HepG2 (cell line): ENCODE measurements at regions of chr15 and their contacts with region 1.

Region 1: GRCh38 chr15:39580117-39580484 is 778 bp upstream of the THBS1 start:
- DNase-seq: peak; percentile 81
- ATAC-seq: peak; percentile 81
- H3K4me3 ChIP-seq: peak overlapping the region; percentile 64 to 88 (median 67)
- H3K27ac ChIP-seq: peak overlapping the region; percentile 65
- H3K4me1 ChIP-seq: peaks cover 50% of the 10 kb centered on the region
- H3K27me3 ChIP-seq: peaks cover 0 to 4% of the 10 kb centered on the region in 2 experiments; a peak in 1 of 5 replicates
- CTCF ChIP-seq: peak; percentile 87
- EP300 ChIP-seq: no peak
- POLR2A ChIP-seq: no peak
- RAD21 ChIP-seq: peak; percentile 92

Region 2: DNA sequence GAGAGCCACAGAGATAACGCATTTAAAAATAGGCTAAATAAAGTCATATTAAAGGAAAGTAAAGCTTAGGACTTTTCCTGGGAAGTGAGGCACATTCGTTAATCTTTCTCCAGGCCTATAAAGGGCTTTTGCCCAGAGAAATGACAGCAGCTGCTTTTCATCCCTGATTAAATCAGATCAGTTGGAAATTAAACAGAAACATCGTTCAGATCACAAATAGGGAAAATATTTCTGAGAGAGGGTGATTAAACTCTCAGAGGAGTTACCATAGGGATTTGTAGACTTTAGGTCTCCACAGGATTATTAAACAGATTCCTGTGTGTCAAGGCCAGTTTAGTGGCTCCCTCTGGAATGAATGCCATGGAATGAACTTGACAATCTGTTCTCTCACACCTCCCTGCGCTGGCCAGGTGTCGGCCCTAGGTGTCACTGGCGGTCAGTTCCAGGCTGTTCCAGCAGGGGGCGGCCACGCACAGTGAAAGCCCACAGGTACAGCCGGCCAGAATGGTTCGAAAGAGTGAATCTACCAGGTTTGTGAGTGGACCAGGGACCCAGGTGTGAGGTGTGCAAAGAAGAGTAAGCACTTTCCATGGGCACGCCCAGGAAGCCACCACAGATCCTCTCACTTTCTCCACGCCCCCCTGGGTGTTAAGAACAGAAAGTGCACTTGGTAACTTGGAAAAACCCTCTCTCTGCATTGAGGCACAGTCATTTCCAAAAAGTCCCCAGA is 762.5 kb before region 1 on chr15:
- CTCF ChIA-PET with region 1: interaction called, 16 read pairs
- POLR2A ChIA-PET with region 1: no interaction called
- in situ Hi-C with region 1: loop called (anchors 10 kb)
- intact Hi-C with region 1: loop called (anchors 1 kb)
- DNase-seq: peak; percentile 66
- ATAC-seq: peak; percentile 100
- H3K4me3 ChIP-seq: no peak overlapping the region
- H3K27ac ChIP-seq: no peak overlapping the region
- H3K4me1 ChIP-seq: no peaks in the 10 kb centered on the region
- H3K27me3 ChIP-seq: peaks cover 0 to 5% of the 10 kb centered on the region in 2 experiments; a peak in 2 of 5 replicates
- CTCF ChIP-seq: peak; percentile 98
- EP300 ChIP-seq: no peak
- POLR2A ChIP-seq: no peak
- RAD21 ChIP-seq: peak; percentile 91

Region 3: DNA sequence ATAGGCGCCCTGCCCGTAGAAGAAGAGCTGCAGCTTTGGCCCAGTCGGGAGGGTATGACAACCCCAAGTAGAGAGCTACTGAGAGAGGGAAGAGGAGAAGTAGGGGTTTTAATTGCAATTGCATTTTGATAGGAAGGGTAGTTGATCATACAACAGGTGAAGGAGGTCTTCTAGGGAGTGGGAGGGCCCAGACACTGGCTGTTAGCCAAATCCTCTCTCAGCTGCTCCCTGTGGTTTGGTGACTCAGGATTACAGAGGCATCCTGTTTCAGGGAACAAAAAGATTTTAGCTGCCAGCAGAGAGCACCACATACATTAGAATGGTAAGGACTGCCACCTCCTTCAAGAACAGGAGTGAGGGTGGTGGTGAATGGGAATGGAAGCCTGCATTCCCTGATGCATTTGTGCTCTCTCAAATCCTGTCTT is 408.1 kb before region 1 on chr15:
- CTCF ChIA-PET with region 1: interaction called, 26 read pairs
- POLR2A ChIA-PET with region 1: interaction called, 50 read pairs
- in situ Hi-C with region 1: loop called (anchors 5 kb)
- intact Hi-C with region 1: loop called (anchors 1 kb)
- DNase-seq: peak; percentile 85
- ATAC-seq: peak; percentile 94
- H3K4me3 ChIP-seq: no peak overlapping the region; a peak in 1 of 6 replicates
- H3K27ac ChIP-seq: no peak overlapping the region
- H3K4me1 ChIP-seq: peaks cover 50% of the 10 kb centered on the region
- H3K27me3 ChIP-seq: no peaks in the 10 kb centered on the region
- CTCF ChIP-seq: peak; percentile 89
- EP300 ChIP-seq: peak in 1 of 2 experiments; percentile 11; a peak in 1 of 4 replicates
- POLR2A ChIP-seq: no peak
- RAD21 ChIP-seq: peak; percentile 84

Region 4: DNA sequence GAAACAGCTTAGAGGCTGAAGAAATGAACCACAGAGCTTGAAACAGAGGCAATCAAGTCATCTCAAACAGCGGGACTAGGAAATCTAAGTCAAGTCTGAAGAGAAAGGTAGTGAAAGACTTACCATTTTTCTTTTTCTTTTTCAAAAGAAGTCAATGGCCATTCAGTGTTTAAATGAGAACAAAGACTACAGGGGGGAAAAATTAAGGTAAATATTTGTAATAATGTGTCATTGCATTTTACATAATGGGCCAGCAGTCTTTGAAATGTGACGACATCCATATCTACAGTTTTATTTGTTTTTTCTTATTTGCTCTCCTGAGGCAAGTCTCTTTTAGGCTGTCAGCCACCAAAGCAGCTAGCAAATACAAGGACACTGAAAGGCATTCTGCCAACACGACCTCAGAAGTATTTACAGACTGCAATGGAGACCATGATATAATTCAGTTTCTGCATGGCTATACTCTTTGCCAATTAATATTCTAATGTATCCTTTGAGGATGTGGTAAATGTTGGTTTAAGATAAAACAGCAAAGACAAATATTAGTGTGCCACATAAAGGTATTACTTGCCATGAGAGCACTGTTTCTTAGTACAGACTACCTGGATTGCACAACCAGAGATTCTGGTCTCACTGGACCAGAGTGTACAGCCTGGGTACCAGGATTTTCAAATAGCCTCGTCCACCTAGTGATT is 306.2 kb before region 1 on chr15:
- CTCF ChIA-PET with region 1: interaction called, 3 read pairs
- POLR2A ChIA-PET with region 1: interaction called, 27 read pairs
- in situ Hi-C with region 1: no loop called
- intact Hi-C with region 1: loop called (anchors 1 kb)
- DNase-seq: peak; percentile 100
- ATAC-seq: peak; percentile 90
- H3K4me3 ChIP-seq: peak overlapping the region in 2 of 3 experiments; percentile 22 to 29; a peak in 1 of 6 replicates
- H3K27ac ChIP-seq: peak overlapping the region; percentile 85
- H3K4me1 ChIP-seq: peaks cover 83% of the 10 kb centered on the region
- H3K27me3 ChIP-seq: no peaks in the 10 kb centered on the region
- CTCF ChIP-seq: no peak
- EP300 ChIP-seq: peak; percentile 86 to 96
- POLR2A ChIP-seq: no peak
- RAD21 ChIP-seq: no peak

Region 5: DNA sequence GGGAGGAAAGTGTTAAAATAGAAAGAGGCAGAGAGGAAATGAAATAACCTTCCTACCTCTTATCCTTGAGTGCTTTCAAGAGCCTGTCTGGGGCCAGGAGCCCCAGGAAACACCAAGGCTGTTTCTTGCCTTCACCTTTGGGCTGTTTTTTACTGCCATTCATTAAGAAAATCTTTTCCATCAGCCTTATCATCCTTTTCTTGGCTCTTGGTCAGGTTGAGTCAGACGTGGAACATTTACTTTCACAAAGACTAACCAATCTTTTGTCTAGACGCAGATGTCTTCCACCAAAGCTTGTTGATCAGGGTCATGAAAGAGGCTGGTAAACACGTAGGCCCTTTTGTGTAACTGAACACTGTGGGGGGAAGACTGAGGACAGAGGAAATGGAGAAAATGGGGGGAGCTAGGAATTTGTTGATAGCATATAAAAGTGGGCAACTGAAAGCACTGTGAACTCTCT is 150.2 kb before region 1 on chr15:
- CTCF ChIA-PET with region 1: no interaction called
- POLR2A ChIA-PET with region 1: interaction called, 4 read pairs
- in situ Hi-C with region 1: loop called (anchors 10 kb)
- intact Hi-C with region 1: loop called (anchors 2 kb)
- DNase-seq: peak; percentile 20
- ATAC-seq: no peak
- H3K4me3 ChIP-seq: no peak overlapping the region
- H3K27ac ChIP-seq: no peak overlapping the region
- H3K4me1 ChIP-seq: peaks cover 65% of the 10 kb centered on the region
- H3K27me3 ChIP-seq: no peaks in the 10 kb centered on the region
- CTCF ChIP-seq: no peak
- EP300 ChIP-seq: no peak
- POLR2A ChIP-seq: no peak
- RAD21 ChIP-seq: no peak

Region 6: DNA sequence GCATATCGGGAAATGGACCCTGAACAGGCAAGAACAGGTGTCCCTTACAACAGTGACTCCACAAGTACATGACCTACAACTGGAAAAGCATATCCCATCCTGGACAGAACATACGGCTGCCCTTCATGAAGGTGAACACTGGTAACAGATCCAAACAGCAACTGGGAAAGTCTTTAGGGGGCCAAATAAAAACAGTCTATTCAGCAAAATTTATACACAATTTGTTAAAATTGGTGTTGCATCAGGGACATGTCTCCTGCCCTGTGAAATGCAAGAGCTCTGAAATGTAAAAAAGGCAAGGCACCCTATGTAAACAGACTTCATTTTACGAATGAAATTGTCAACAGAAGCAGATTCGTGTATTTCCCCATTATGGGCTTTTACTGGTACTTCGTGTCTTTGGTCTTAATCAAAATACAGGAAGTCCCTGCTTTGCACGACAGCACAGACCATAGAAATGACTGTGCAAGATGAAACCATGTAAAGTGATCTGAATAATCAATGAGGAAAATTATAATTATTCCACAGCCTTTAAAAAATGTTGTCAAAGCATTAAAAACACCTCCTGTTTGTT is 126.5 kb before region 1 on chr15:
- CTCF ChIA-PET with region 1: no interaction called
- POLR2A ChIA-PET with region 1: interaction called, 24 read pairs
- in situ Hi-C with region 1: no loop called
- intact Hi-C with region 1: loop called (anchors 1 kb)
- DNase-seq: no peak
- ATAC-seq: no peak
- H3K4me3 ChIP-seq: no peak overlapping the region
- H3K27ac ChIP-seq: no peak overlapping the region
- H3K4me1 ChIP-seq: peaks cover 52% of the 10 kb centered on the region
- H3K27me3 ChIP-seq: no peaks in the 10 kb centered on the region
- CTCF ChIP-seq: no peak
- EP300 ChIP-seq: no peak
- POLR2A ChIP-seq: no peak
- RAD21 ChIP-seq: no peak